Transverse colon (tissue), 4 donors: ENCODE measurements at regions of chr11 and their contacts with region 1.

Region 1: DNA sequence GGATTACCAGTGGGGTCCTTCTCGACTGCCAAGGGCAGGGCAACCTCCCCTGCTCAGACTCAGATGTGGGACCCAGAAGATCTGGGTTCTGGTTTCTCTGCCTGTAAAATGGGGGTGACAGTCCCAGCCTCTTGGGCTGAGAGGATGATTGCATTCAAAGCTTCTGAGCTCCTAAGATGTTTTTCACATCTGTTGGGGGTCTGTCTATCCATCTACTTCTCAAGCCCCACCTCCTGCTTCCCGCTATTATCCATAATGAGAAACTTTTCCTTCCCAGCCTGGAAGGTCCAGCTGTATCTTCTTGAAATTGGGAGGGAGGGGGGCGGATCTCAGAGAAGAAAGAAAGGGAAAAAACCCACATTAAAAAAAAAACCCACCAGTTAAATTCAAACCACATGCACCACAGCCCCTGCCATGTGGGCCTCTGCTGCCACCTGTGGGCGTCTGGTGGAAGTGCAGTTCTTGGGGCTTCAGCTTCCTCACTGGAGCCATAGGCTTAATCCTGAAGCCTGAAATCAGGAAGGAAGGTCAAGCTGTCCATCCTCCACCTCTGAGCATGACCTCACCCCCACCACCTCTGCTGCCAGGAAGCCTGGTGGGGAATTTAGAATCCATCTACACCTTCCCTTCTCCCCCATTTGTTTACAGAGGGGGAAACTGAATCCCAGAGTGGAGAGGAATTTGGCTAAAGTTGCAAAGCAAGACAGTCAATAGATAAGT is 27.3 kb downstream of the ARHGEF17 start:
- DNase-seq: peak; percentile 87
- H3K4me3 ChIP-seq: no peak overlapping the region
- H3K27ac ChIP-seq: peak overlapping the region; percentile 61 to 84 (median 73)
- H3K4me1 ChIP-seq: peaks cover 33 to 68% (median 43%) of the 10 kb centered on the region in 4 donors
- H3K27me3 ChIP-seq: no peaks in the 10 kb centered on the region
- CTCF ChIP-seq: peak; percentile 91 to 100 (median 99)
- EP300 ChIP-seq: no peak
- POLR2A ChIP-seq: no peak

Region 2: DNA sequence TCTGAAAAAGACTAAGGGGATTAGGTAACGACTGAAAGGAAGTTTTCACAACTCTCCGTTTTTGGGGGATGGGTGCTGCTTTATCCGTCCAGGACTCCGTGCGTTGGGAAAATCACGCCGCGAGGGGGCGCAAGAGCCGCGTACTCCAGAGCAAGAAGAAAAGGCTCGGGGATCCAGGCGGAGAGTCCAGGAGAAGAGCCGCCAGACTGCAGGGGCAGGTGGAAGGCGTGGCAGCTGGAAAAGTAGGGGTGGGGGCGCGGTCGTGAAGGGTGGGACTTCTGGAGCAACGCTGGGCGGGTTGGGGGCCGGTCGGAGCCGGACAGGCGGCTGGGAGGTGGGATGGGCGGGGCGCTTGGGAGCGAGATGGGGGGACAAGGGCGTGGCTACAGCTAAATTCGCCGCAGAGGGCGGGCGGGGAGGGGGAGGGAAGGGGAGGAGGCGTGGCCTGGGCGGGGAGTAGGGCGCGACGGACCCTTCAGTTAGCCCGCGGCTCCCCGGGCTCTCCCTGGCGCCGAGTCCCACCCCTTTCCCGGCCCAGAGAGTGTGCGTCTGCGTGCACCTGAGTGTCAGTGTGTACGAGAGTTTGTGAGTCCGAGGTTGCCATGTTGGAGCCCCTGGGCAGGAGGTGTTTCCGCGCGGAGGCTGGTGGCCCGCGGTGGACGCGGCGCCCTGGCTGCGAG is 27.9 kb before region 1 on chr11:
- in situ Hi-C with region 1: loop called in 1 of 4 experiments (anchors 5 kb)
- intact Hi-C with region 1: loop called (anchors 1 kb)
- DNase-seq: peak; percentile 97
- H3K4me3 ChIP-seq: peak overlapping the region; percentile 45 to 88 (median 62)
- H3K27ac ChIP-seq: peak overlapping the region; percentile 95 to 99 (median 95)
- H3K4me1 ChIP-seq: peaks cover 3 to 52% (median 25%) of the 10 kb centered on the region in 4 donors
- H3K27me3 ChIP-seq: peaks cover 13% of the 10 kb centered on the region
- CTCF ChIP-seq: peak; percentile 74 to 96 (median 88)
- EP300 ChIP-seq: no peak
- POLR2A ChIP-seq: peak; percentile 68

Region 3: DNA sequence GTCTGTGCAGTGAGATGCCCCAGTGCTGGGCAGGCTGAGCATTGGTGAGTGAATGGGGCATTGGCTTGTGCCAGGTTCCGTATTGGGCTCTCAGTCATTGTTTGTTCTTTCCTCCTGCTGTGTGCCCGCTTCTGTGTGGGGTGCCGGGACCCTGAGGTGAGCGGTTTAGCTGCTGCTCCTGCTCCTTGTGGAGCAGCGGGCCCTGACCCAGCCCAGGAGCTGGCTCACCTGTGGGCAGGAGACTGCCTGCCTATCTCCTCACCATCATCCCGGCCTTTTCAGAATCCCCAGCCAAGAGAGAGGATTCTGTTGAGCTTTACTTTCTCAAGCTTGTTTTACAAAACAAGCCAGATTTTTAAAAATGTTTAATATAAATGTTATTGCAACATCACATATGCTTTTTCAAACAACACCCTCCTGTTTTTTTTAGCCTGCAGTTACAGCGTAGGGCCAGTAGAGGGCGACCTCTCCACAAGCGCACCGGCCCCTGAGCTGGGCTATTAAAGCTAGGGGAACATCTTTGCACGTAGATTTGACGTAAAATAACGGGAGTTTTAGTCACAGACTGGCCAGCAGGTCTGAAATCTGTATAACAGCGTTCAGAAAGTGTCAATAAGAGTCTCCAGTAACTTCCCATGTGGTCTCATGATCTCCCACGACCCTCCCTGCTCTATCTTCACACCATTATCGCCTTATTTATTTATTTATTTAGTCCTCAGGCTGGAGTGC is 15.7 kb after region 1 on chr11:
- in situ Hi-C with region 1: no loop called
- intact Hi-C with region 1: loop called (anchors 2 kb)
- DNase-seq: peak; percentile 59
- H3K4me3 ChIP-seq: no peak overlapping the region
- H3K27ac ChIP-seq: peak overlapping the region in 1 of 4 donors; percentile 22
- H3K4me1 ChIP-seq: peaks cover 0 to 7% (median 3%) of the 10 kb centered on the region in 4 donors
- H3K27me3 ChIP-seq: no peaks in the 10 kb centered on the region
- CTCF ChIP-seq: peak; percentile 90 to 99 (median 97)
- EP300 ChIP-seq: no peak
- POLR2A ChIP-seq: no peak